ENCODE measurements at regions of chr14 and their contacts with region 1.

Region 1: GRCh38 chr14:71138448-71139293 is 231.4 kb downstream of the PCNX1 start:
- DNase-seq: peak; percentile 37 to 85 (median 66)

Region 2: GRCh38 chr14:71021347-71022014 is 117.2 kb before region 1 on chr14:
- intact Hi-C with region 1: no loop called
- DNase-seq: no peak

Region 3: DNA sequence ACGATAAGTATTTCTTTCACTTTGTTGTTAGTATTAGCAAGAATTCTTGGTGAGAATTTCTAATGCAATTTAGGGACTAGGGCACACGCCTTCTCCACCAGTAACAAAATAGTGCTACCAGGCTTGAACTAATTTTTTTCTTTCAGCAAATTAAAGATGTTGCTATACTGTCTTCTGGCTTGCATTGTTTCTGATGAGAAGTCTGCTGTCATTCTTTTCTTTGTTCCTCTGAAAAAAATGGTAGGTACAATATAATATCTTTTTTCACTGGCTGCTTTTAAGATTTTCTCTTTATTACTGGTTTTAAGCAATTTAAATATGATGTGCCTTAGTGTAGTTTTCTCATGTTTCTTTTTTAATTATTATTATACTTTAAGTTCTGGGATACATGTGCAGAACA is 60.2 kb before region 1 on chr14:
- intact Hi-C with region 1: no loop called
- DNase-seq: no peak

Region 4: GRCh38 chr14:71753126-71753830 is 614.6 kb after region 1 on chr14:
- intact Hi-C with region 1: loop called (anchors 1 kb)
- DNase-seq: peak; percentile 77 to 94 (median 88)